Activated CD4-positive, alpha-beta memory T cell treated with anti-CD3 and anti-CD28 coated beads for 36 hours (primary cell): ENCODE measurements at regions of chr18 and their contacts with region 1.

Region 1: DNA sequence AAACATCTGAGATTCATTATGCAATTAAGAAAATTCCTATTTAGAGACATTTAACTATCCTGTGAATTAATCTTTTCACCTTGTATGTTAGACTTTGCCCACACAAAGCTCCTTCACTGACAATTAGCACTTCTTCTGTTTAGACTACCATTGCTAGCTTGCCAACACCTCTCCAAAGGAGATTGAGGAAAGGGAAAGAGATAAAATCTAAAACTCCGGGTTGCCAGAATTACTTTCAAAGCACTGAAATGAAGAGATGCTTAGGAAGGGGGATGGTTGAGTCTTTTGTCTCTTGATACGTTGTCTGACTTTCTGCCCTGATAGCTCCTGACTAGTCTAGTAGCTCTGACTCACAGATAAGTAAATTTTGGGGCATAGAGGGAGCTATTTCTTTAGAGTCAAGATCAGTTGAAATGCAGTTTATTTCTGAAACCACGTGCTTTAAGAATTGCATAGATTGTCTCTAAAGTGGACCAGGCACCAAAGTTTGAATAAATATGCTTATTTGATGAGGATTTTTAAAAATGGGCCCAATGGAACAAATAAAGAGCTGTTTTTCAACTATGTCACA is 74.1 kb upstream of the DSEL start:
- DNase-seq: no peak
- H3K4me3 Mint-ChIP-seq: no peak overlapping the region
- H3K27ac Mint-ChIP-seq: no peak overlapping the region
- H3K4me1 Mint-ChIP-seq: no peaks in the 10 kb centered on the region
- H3K27me3 Mint-ChIP-seq: peaks cover 3% of the 10 kb centered on the region

Region 2: GRCh38 chr18:67577386-67577785 is 13.3 kb before region 1 on chr18:
- CTCF ChIA-PET with region 1: no interaction called
- POLR2A ChIA-PET with region 1: no interaction called
- intact Hi-C with region 1: loop called (anchors 2 kb)
- DNase-seq: no peak
- H3K4me3 Mint-ChIP-seq: no peak overlapping the region
- H3K27ac Mint-ChIP-seq: no peak overlapping the region
- H3K4me1 Mint-ChIP-seq: no peaks in the 10 kb centered on the region
- H3K27me3 Mint-ChIP-seq: no peaks in the 10 kb centered on the region

Region 3: GRCh38 chr18:67634631-67635338 is 44.1 kb after region 1 on chr18:
- CTCF ChIA-PET with region 1: no interaction called
- POLR2A ChIA-PET with region 1: no interaction called
- intact Hi-C with region 1: no loop called
- DNase-seq: no peak
- H3K4me3 Mint-ChIP-seq: no peak overlapping the region
- H3K27ac Mint-ChIP-seq: no peak overlapping the region
- H3K4me1 Mint-ChIP-seq: no peaks in the 10 kb centered on the region
- H3K27me3 Mint-ChIP-seq: peaks cover 5% of the 10 kb centered on the region